ENCODE measurements at regions of chr13 and their contacts with region 1.

Region 1: DNA sequence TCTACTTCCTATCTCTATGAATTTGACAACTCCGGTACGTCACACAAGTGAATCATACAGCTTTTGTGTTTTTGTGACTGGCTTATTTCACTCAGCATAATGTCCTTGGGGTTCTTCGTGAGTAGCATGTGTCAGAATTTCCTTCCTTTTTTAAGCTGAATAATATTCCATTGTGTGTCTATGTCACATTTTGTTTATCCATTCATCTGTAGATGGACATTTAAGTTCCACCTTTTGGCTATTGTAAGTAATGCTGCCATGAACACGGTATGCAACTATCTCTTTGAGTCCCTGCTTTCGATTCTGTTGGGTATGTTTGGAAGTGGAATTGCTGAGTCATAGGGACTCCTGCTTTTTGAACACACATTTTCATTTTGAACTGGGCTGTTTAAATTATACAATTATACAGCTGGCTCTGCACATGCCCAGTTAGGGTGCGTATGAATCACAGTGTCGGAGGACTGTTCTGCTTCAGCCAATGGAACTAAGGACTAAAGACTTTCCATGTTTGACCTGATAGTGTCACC is 43.0 kb upstream of the C13orf42 start:
- DNase-seq: no peak

Region 2: GRCh38 chr13:51222037-51222685 is 68.1 kb after region 1 on chr13 and contains the start of gene FAM124A:
- intact Hi-C with region 1: loop called (anchors 5 kb)
- DNase-seq: no peak
- total RNA-seq, gene FAM124A: 4.6 TPM

Region 3: DNA sequence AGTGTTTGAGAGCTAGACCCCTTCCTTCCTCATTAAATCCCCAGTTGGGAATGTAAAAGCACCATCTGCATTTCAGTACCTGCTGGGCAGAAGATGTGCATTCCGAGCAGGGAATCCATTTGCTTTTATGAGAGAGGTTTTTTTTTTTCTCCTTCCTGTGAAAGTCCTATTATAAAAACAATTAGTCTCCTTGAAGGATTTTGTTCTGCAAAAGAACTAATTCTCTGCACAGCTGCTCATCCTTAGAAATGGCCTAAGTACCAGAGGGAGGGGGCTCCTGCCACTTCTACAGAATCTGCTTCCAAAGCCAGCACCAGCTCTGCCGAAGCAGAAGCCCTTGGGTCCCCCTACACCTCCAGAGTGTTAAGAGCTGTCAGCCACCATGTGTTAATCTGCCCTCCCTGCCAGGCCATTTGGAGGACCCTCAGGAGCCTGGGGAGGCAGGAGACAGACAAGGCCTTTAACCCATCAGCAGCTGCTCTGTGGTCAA is 149.0 kb after region 1 on chr13:
- intact Hi-C with region 1: loop called (anchors 5 kb)
- DNase-seq: no peak